ENCODE measurements at regions of chr2 and their contacts with region 1.

Region 1: GRCh38 chr2:12728221-12728777 is 11.6 kb downstream of the TRIB2 start:
- DNase-seq: no peak
- H3K4me3 ChIP-seq: peak overlapping the region in 1 of 4 donors; percentile 9
- H3K27ac ChIP-seq: peak overlapping the region in 1 of 4 donors; percentile 32
- H3K4me1 ChIP-seq: peaks cover 3 to 73% (median 32%) of the 10 kb centered on the region in 3 donors
- H3K27me3 ChIP-seq: no peaks in the 10 kb centered on the region
- CTCF ChIP-seq: no peak
- POLR2A ChIP-seq: no peak

Region 2: GRCh38 chr2:12931186-12931844 is 203.0 kb after region 1 on chr2:
- intact Hi-C with region 1: loop called (anchors 10 kb)
- DNase-seq: no peak
- H3K4me3 ChIP-seq: no peak overlapping the region
- H3K27ac ChIP-seq: no peak overlapping the region
- H3K4me1 ChIP-seq: peaks cover 0 to 17% (median 5%) of the 10 kb centered on the region in 3 donors
- H3K27me3 ChIP-seq: peaks cover 0 to 21% (median 0%) of the 10 kb centered on the region in 4 donors
- CTCF ChIP-seq: peak; percentile 61 to 91 (median 80)
- POLR2A ChIP-seq: no peak